ENCODE measurements at regions of chr7 and their contacts with region 1.

Region 1: GRCh38 chr7:12258074-12258473 is 47.0 kb downstream of the TMEM106B start:
- DNase-seq: no peak
- H3K4me3 ChIP-seq: no peak overlapping the region
- H3K27ac ChIP-seq: no peak overlapping the region
- H3K4me1 ChIP-seq: no peaks in the 10 kb centered on the region
- H3K27me3 ChIP-seq: no peaks in the 10 kb centered on the region
- CTCF ChIP-seq: no peak
- POLR2A ChIP-seq: no peak

Region 2: GRCh38 chr7:12289996-12290395 is 31.9 kb after region 1 on chr7:
- intact Hi-C with region 1: loop called (anchors 1 kb)
- DNase-seq: no peak
- H3K4me3 ChIP-seq: no peak overlapping the region
- H3K27ac ChIP-seq: no peak overlapping the region
- H3K4me1 ChIP-seq: no peaks in the 10 kb centered on the region
- H3K27me3 ChIP-seq: no peaks in the 10 kb centered on the region
- CTCF ChIP-seq: no peak
- POLR2A ChIP-seq: no peak

Region 3: GRCh38 chr7:12418452-12418851 is 160.4 kb after region 1 on chr7:
- intact Hi-C with region 1: no loop called
- DNase-seq: no peak
- H3K4me3 ChIP-seq: no peak overlapping the region
- H3K27ac ChIP-seq: no peak overlapping the region
- H3K4me1 ChIP-seq: no peaks in the 10 kb centered on the region
- H3K27me3 ChIP-seq: no peaks in the 10 kb centered on the region
- CTCF ChIP-seq: no peak
- POLR2A ChIP-seq: no peak